ENCODE measurements at regions of chr1 and their contacts with region 1.

Region 1: DNA sequence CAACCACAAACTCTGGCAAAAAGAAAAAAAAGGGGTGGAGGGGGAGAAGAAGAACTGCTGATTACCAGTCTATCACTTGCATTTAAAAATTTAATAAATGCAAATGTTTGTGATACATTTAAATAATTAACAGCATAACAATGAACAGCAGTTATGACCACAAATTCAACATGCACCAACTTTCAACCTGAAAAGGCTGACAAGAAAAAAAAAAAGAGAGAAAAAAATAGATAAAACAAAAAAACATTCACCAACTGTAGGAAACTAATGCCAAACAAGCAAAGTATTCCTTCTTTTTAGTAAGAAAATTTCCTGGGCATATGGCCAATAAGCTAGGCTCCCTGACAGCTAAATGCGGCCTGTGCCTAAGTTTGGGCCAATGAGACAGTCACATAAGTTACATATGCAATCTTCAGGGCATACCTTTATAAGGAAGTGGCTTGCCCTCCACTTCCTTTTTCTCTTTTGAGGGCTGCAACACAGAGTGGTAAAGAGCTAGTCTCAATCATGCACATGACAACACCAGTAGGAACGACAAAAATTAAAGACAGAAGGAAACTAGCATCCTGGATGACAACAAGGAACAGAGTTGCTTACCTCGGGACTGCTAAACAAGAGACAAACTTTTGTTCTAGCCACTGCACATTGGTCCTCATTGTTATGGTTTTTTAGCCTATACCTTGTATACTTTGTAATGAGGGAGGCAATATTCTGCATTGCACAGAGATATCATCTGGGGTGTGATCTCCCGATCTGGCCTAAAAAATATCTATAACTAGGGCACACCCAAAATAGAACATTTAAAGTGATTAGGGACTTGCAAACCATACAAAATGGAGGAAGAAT is 24.2 kb upstream of the PHTF1 start:
- DNase-seq: peak; percentile 51
- ATAC-seq: peak; percentile 80
- H3K4me3 Mint-ChIP-seq: peak overlapping the region; percentile 20
- H3K27ac Mint-ChIP-seq: peak overlapping the region; percentile 96
- H3K4me1 Mint-ChIP-seq: peaks cover 35% of the 10 kb centered on the region
- H3K27me3 Mint-ChIP-seq: no peaks in the 10 kb centered on the region

Region 2: GRCh38 chr1:113759333-113760101 is 24.0 kb before region 1 on chr1 and contains the start of gene PHTF1:
- CTCF ChIA-PET with region 1: interaction called, 5 read pairs
- POLR2A ChIA-PET with region 1: no interaction called
- intact Hi-C with region 1: loop called (anchors 1 to 2 kb)
- DNase-seq: peak; percentile 77
- ATAC-seq: peak; percentile 81
- H3K4me3 Mint-ChIP-seq: peak within 1 kb of the TSS; percentile 81
- H3K27ac Mint-ChIP-seq: peak within 1 kb of the TSS; percentile 94
- H3K4me1 Mint-ChIP-seq: peaks cover 13% of the 10 kb centered on the region
- H3K27me3 Mint-ChIP-seq: no peaks in the 10 kb centered on the region
- total RNA-seq, gene PHTF1: 11.3 to 12.2 TPM

Region 3: GRCh38 chr1:113765306-113766230 is 17.9 kb before region 1 on chr1:
- CTCF ChIA-PET with region 1: interaction called, 5 read pairs
- POLR2A ChIA-PET with region 1: no interaction called
- intact Hi-C with region 1: loop called in 1 of 2 experiments (anchors 1 kb)
- DNase-seq: no peak
- ATAC-seq: no peak
- H3K4me3 Mint-ChIP-seq: no peak overlapping the region
- H3K27ac Mint-ChIP-seq: no peak overlapping the region
- H3K4me1 Mint-ChIP-seq: peaks cover 34% of the 10 kb centered on the region
- H3K27me3 Mint-ChIP-seq: no peaks in the 10 kb centered on the region

Region 4: GRCh38 chr1:113804421-113805255 is 21.2 kb after region 1 on chr1:
- CTCF ChIA-PET with region 1: interaction called, 5 read pairs
- POLR2A ChIA-PET with region 1: interaction called, 4 read pairs
- intact Hi-C with region 1: loop called (anchors 1 kb)
- DNase-seq: no peak
- ATAC-seq: peak; percentile 40
- H3K4me3 Mint-ChIP-seq: no peak overlapping the region
- H3K27ac Mint-ChIP-seq: no peak overlapping the region
- H3K4me1 Mint-ChIP-seq: peaks cover 80% of the 10 kb centered on the region
- H3K27me3 Mint-ChIP-seq: no peaks in the 10 kb centered on the region

Region 5: DNA sequence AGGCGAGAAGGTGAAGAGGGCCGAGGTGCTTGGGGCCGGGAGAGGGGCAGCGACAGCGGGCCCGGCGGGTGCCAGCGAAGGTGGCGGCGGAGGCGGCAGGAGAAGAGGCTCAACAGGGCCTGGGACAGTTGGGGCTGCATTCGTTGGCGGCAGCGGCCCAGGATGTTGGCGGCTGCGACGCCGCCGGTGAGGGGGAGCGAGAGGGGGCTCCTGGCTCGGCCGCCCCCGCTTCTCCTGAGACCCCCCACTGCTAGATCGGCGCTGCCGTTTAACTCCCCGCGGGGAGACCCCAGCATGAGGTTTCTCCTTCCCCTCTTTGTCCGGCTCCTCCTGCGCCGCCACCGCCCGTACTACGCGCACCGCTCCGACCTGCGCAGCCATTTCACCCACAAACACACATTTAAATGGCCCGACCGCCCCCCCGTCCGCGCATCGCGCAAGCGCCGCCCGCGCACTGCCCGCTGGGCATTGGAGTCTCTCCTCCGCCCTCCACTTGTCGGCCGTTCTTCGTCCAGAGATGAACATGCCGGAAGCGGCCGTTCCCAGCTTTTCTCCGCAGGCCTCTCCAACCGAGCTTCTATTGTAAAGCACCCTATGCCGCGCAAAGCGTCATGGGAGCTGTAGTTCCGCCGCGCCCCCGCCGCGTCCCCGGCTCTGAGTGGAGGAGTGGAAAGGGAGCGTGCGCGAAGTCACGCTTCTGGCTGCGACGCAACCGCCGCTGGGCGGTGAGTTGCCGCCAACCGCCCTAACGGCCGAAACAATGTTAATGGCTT is 28.6 kb after region 1 on chr1 and contains the start of gene RSBN1:
- CTCF ChIA-PET with region 1: interaction called, 7 read pairs
- POLR2A ChIA-PET with region 1: interaction called, 3 read pairs
- intact Hi-C with region 1: loop called in 1 of 2 experiments (anchors 1 kb)
- DNase-seq: peak; percentile 99
- ATAC-seq: peak; percentile 97
- H3K4me3 Mint-ChIP-seq: peak within 1 kb of the TSS; percentile 97
- H3K27ac Mint-ChIP-seq: peak within 1 kb of the TSS; percentile 97
- H3K4me1 Mint-ChIP-seq: peaks cover 33% of the 10 kb centered on the region
- H3K27me3 Mint-ChIP-seq: no peaks in the 10 kb centered on the region
- total RNA-seq, gene RSBN1: 22.1 to 24.3 TPM